Testis (tissue), 5 donors: ENCODE measurements at regions of chr1 and their contacts with region 1.

Region 1: DNA sequence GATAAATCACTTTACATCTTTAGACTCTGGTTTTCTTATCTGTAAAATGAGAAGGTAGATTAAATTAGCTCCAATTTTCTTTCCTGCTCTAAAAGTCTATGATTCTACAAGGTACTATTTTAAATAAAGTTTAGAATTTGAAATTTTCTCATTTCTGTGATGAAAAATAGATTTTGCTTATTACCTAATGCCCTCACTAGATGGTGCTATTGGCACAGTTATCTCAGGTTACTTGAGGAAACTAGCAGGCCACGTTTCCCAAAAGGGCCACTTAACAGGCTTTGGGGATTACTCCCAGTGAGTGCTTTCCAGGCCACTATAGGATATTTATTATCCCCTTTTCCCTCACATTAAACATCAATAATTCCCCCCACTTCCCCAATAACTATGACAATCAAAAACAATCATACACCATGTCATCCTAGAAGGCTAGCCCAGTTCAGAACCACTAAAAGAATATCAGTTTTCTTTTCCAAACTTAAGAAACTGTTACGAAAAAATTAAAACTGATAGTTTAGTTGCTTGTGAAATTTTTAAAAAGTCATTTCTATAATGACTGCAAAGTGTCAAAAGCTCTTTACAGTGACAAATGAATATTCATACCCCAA is 30.6 kb downstream of the OMA1 start:
- DNase-seq: peak; percentile 48
- H3K4me3 ChIP-seq: no peak overlapping the region
- H3K27ac ChIP-seq: no peak overlapping the region
- H3K4me1 ChIP-seq: no peaks in the 10 kb centered on the region
- H3K27me3 ChIP-seq: no peaks in the 10 kb centered on the region
- CTCF ChIP-seq: peak; percentile 58 to 66 (median 66)
- POLR2A ChIP-seq: no peak

Region 2: DNA sequence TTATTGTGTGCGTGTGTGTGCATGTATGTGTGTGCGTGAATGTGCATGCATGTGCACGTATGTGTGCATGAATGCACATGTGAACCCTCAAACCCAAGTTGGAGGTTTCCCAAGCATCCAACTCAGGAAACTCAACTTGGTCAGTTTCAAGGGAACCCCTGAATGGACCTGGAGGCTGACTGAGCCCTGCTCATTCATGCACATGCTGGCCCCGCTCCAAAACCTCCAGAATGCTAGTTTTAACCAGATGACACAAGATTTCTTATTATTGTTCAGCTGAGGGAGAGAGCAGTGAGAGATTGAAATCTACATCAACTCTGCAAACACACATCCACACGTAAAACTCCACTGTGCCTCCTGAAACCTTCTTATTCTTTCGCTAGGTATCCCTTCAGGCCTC is 73.8 kb before region 1 on chr1:
- intact Hi-C with region 1: no loop called
- DNase-seq: no peak
- H3K4me3 ChIP-seq: no peak overlapping the region
- H3K27ac ChIP-seq: no peak overlapping the region
- H3K4me1 ChIP-seq: peaks cover 11% of the 10 kb centered on the region
- H3K27me3 ChIP-seq: no peaks in the 10 kb centered on the region
- CTCF ChIP-seq: no peak
- POLR2A ChIP-seq: no peak

Region 3: DNA sequence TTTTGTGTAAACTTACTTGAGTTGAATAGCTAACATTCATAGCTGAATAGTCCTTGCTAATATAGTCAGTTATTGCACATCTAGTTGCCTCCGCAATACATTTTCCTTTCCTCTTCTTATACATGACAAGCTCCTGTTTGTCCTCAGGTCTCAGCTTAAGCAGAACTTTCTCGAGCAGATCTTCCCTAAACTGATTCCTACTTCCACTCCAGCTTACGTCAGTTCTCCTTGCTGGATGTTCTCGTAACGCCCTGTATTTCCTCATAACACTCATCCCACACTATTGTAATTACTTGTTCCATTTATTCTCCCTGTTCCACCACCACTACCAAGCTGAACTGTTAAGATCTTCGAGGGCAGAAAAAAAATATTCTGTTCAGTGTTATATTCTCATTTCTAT is 45.7 kb after region 1 on chr1:
- intact Hi-C with region 1: no loop called
- DNase-seq: no peak
- H3K4me3 ChIP-seq: no peak overlapping the region
- H3K27ac ChIP-seq: no peak overlapping the region
- H3K4me1 ChIP-seq: no peaks in the 10 kb centered on the region
- H3K27me3 ChIP-seq: no peaks in the 10 kb centered on the region
- CTCF ChIP-seq: no peak
- POLR2A ChIP-seq: no peak

Region 4: DNA sequence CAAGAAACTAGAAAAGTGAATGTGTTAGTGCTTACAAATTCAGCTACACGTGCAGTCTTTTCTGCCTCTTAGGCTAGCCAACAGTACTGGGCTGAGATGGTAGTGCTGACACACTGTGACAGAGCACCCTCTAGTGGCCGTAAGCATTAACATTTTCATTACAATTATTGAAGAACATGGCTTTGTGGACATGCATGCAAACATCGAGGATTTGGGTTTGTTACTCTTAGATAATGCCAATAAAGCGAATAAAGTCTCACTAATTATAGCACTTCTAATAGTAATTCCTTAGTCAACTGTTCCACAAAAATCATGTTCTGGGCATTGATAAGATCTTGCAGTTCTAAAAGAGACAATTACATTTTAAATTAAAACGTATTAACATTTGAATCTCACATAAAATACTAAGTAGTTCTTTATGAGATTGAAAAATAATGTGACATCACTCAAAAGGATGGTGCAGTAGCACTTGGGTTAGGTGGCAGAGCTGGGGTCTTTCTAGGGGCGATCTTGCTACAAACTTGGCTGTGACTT is 136.8 kb after region 1 on chr1:
- intact Hi-C with region 1: loop called (anchors 10 kb)
- DNase-seq: peak; percentile 75
- H3K4me3 ChIP-seq: no peak overlapping the region
- H3K27ac ChIP-seq: no peak overlapping the region
- H3K4me1 ChIP-seq: no peaks in the 10 kb centered on the region
- H3K27me3 ChIP-seq: no peaks in the 10 kb centered on the region
- CTCF ChIP-seq: peak; percentile 77 to 82 (median 79)
- POLR2A ChIP-seq: no peak